K562 (cell line): ENCODE measurements at regions of chr5 and their contacts with region 1.

Region 1: GRCh38 chr5:96868603-96869371 is 7.5 kb upstream of the ERAP2 start:
- DNase-seq: peak; percentile 27 to 70 (median 42)
- ATAC-seq: peak; percentile 95
- H3K4me3 ChIP-seq: no peak overlapping the region
- H3K27ac ChIP-seq: no peak overlapping the region
- H3K4me1 ChIP-seq: peaks cover 0 to 5% of the 10 kb centered on the region in 2 experiments; a peak in 2 of 5 replicates
- H3K27me3 ChIP-seq: no peaks in the 10 kb centered on the region
- CTCF ChIP-seq: peak; percentile 82 to 94 (median 88)
- EP300 ChIP-seq: no peak
- POLR2A ChIP-seq: no peak
- RAD21 ChIP-seq: peak; percentile 97 to 99

Region 2: DNA sequence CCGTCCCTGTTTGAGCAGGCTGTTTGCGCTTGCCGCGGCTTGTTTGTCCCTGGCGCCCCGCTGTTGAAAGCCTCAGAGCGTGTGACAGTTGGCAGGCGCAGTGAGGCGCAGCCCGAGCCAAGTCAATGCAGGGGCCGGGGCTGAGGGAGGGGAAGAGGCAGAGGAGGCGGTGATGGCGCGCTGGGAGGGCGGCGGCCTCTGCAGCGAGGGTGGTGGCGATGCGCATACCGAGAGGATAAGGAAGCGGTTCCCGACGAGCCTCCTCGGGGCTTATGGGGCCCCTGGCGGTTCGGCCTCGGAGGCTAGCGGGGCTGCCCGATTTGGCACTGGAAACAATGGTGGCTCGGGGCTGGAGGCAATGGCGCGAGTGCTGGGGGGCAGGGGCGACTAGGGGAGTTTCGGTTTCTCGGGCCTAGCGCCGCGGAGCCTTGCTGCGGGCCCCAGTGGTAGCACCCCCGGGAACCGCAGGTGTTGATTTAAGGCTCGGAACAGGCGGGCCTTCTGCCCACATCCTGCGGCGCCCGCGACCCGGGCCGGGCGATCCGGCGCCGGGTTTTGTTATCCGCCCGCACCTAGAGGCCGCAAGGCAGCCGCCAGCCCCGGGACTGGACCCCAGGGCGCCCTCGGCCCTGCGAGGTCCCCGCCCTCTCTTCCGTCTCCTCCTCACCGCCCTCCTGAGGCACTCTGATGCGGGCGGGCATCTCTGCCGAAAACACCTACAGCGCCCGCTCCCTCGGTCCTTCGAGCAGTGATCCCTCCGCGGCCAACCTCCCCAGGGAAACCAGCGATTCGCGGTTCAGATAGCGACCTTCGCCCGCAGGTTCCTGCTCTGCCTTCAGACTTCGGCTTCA is 66.1 kb after region 1 on chr5:
- CTCF ChIA-PET with region 1: no interaction called
- POLR2A ChIA-PET with region 1: no interaction called
- in situ Hi-C with region 1: no loop called
- intact Hi-C with region 1: loop called (anchors 1 kb)
- DNase-seq: peak; percentile 85 to 94 (median 86)
- ATAC-seq: peak; percentile 85
- H3K4me3 ChIP-seq: peak overlapping the region; percentile 75
- H3K27ac ChIP-seq: peak overlapping the region; percentile 85
- H3K4me1 ChIP-seq: peaks cover 40 to 43% of the 10 kb centered on the region in 2 experiments
- H3K27me3 ChIP-seq: no peaks in the 10 kb centered on the region
- CTCF ChIP-seq: no peak; a peak in 1 of 6 replicates
- EP300 ChIP-seq: 0 out of 2 replicates have a peak, but pooled peaks have one; percentile 31
- POLR2A ChIP-seq: peak; percentile 90
- RAD21 ChIP-seq: no peak; a peak in 1 of 4 replicates

Region 3: DNA sequence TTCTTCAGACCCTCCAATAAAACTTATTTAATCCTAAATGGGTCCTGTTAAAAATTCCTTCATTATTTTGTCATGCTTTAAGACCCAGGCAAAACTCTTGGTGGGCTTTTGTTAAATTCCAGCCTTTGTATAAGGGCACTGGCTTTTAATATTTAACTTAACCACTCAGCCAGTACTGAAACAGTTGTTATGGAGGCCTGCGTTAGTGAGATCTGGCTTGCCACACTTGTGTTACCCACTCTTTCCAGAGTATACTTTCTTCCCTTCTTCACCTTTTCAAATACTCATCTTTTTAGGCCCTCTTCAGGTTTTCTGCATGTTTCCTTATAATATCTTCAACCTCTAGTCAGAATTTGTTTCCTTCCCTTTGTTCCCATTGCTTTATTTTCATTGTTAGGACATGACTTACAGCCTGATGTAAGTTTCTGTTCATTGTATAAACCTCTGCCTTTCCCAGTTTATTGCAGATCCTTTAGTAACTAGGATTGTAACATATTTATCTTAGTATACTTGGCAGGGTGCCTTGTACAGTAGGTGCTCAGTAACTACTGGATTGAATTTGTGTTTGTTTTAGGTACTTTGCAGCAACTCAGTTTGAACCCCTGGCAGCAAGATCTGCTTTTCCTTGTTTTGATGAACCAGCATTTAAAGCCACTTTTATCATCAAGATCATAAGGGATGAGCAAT is 115.9 kb after region 1 on chr5:
- CTCF ChIA-PET with region 1: no interaction called
- POLR2A ChIA-PET with region 1: no interaction called
- in situ Hi-C with region 1: no loop called
- intact Hi-C with region 1: loop called (anchors 5 kb)
- DNase-seq: no peak
- ATAC-seq: no peak
- H3K4me3 ChIP-seq: no peak overlapping the region
- H3K27ac ChIP-seq: no peak overlapping the region
- H3K4me1 ChIP-seq: no peaks in the 10 kb centered on the region
- H3K27me3 ChIP-seq: no peaks in the 10 kb centered on the region
- CTCF ChIP-seq: no peak
- EP300 ChIP-seq: no peak
- POLR2A ChIP-seq: no peak
- RAD21 ChIP-seq: no peak

Region 4: DNA sequence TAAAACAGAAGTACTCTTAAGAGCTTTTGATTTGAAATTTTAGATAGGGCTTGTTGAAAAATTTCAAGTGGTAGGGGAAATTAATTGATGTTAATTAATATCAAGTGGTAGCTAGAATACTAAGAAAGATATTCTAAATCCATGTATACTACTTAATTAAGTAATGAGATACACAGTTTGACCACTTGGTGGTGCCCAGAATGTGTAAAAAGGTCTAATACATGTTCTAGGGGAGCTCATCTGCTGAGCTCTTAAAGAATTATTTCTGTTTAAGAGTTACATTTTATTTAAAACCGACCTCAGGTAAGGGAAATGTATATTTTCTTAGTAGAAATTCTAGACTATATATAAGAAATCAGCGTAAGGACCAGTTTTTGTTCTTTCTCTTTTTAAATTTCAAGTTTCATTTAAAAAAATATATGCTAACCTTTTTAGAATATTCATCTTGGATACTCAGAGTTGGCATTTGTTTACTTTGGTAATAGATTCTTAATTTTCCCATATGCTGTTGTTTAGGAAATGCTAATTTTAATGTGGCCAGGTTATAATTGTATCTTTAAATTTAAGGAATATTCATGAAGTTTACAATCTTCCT is 128.6 kb after region 1 on chr5:
- CTCF ChIA-PET with region 1: no interaction called
- POLR2A ChIA-PET with region 1: no interaction called
- in situ Hi-C with region 1: no loop called
- intact Hi-C with region 1: loop called (anchors 5 kb)
- DNase-seq: peak; percentile 13 to 56 (median 22)
- ATAC-seq: peak; percentile 82
- H3K4me3 ChIP-seq: no peak overlapping the region
- H3K27ac ChIP-seq: no peak overlapping the region
- H3K4me1 ChIP-seq: no peaks in the 10 kb centered on the region
- H3K27me3 ChIP-seq: no peaks in the 10 kb centered on the region
- CTCF ChIP-seq: peak in 2 of 3 experiments; percentile 31 to 60; a peak in 3 of 6 replicates
- EP300 ChIP-seq: no peak
- POLR2A ChIP-seq: no peak
- RAD21 ChIP-seq: peak; percentile 57 to 73

Region 5: DNA sequence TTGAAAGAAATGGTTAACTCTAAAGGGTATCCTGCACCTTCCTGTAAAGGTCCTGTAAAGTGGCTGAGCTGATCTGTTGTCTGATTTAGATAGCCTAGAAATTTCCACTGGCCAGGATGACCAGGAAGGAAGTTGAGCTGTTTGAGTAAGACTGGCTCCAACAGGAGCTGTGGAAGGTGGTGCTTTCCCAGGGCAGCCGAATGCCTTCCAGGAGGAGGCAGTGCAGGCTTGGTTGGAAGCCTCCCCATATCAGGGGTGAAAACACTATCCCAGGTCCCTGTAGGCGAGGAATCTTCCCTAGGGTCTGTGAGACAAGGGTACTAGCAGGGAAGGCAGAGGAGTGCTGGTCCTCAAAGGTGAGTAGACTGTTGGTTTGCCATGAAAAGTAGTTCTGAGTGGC is 175.3 kb after region 1 on chr5:
- CTCF ChIA-PET with region 1: interaction called, 3 read pairs
- POLR2A ChIA-PET with region 1: no interaction called
- in situ Hi-C with region 1: no loop called
- intact Hi-C with region 1: loop called (anchors 1 kb)
- DNase-seq: peak in 2 of 4 experiments; percentile 17 to 44
- ATAC-seq: peak; percentile 85
- H3K4me3 ChIP-seq: no peak overlapping the region
- H3K27ac ChIP-seq: no peak overlapping the region
- H3K4me1 ChIP-seq: no peaks in the 10 kb centered on the region; a peak in 2 of 5 replicates
- H3K27me3 ChIP-seq: no peaks in the 10 kb centered on the region; a peak in 1 of 5 replicates
- CTCF ChIP-seq: peak; percentile 62 to 68 (median 63)
- EP300 ChIP-seq: no peak
- POLR2A ChIP-seq: no peak
- RAD21 ChIP-seq: peak; percentile 55 to 76

Region 6: DNA sequence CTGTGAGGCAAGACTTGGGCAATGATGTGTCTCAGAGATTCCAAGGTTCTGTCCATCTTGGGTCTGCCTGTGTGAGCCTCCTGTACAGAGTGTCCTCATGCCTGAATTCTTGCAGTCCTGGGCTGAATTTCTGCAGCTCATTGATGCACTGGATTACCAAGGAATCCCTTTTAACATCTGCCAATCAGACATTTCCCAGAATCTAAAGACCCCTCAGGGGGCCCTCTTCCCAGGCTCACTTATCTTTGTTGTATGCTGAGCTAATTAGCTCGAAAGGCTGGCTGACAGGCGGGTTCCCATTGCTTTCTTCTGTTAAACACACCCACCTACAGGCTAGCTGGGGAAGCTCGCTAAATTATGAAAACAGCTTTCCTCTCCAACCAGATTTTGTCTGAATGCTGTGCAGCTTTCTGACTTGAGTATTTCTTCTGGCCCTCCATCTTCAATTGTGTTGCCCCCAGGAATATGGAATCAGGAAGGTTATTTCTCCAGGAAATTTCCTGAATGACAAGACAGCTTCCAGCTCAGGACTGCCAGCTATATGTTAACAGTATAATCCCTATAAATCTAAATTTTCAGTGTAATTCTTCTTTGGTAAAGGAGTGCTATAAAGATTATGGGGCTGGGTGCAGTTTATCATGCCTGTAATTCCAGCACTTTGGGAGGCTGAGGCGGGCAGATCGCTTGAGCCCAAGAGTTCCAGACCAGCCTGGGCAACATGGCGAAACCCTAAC is 273.9 kb after region 1 on chr5 and contains the start of gene LIX1:
- CTCF ChIA-PET with region 1: interaction called, 7 read pairs
- POLR2A ChIA-PET with region 1: interaction called, 3 read pairs
- in situ Hi-C with region 1: no loop called
- intact Hi-C with region 1: loop called (anchors 1 kb)
- DNase-seq: peak in 2 of 4 experiments; percentile 35 to 54
- ATAC-seq: peak; percentile 95
- H3K4me3 ChIP-seq: no peak within 1 kb of the TSS
- H3K27ac ChIP-seq: no peak within 1 kb of the TSS
- H3K4me1 ChIP-seq: no peaks in the 10 kb centered on the region
- H3K27me3 ChIP-seq: no peaks in the 10 kb centered on the region
- CTCF ChIP-seq: peak; percentile 56 to 78 (median 63)
- EP300 ChIP-seq: no peak
- POLR2A ChIP-seq: no peak
- RAD21 ChIP-seq: peak; percentile 78
- polyA plus RNA-seq, gene LIX1: 0.01 to 0.18 TPM